AG04449 (cell line): ENCODE measurements at regions of chr17 and their contacts with region 1.

Region 1: DNA sequence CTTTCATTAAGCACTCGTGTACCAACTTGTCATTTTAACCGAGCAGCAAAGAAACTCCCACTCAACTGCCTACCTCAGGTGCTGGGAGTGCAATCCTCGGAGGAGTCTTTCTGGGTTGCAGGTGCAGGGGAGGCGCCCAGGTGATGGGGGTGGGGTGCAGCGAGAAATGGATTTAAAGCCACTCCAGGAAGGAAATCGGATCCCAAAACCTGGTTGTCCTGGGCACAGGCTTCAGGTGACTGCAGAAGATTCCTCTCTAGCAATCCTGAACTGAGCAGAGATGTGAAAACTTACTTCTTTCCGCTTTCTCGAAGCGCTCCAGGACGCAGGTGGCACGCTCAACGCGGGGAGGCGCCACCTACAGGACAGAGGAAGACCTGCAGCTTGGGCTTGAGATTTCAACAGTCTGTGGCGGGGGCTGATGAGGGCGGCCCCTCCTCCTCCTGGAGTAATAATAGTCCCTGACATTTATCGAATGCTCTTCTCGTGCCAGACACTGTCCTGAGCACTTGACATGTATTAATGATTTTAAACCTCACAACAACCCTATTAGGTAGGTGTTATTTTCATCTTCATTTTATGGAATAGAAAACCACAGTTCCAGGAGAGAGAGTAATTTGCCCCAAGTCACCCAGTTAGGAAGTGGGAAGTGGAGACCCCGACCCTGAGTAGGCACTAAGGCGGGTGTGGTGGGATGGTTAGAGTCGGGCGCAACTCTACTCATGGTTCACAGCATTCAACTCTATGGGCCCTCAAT is 27.2 kb upstream of the SKAP1 start:
- DNase-seq: no peak
- H3K4me3 ChIP-seq: no peak overlapping the region
- CTCF ChIP-seq: peak; percentile 97

Region 2: GRCh38 chr17:48307814-48308411 is 149.3 kb before region 1 on chr17:
- CTCF ChIA-PET with region 1: no interaction called
- POLR2A ChIA-PET with region 1: no interaction called
- DNase-seq: peak; percentile 17
- H3K4me3 ChIP-seq: no peak overlapping the region
- CTCF ChIP-seq: peak; percentile 85

Region 3: GRCh38 chr17:48441231-48441711 is 16.0 kb before region 1 on chr17:
- CTCF ChIA-PET with region 1: interaction called, 17 read pairs
- POLR2A ChIA-PET with region 1: no interaction called
- DNase-seq: no peak
- H3K4me3 ChIP-seq: no peak overlapping the region
- CTCF ChIP-seq: no peak

Region 4: GRCh38 chr17:48472411-48473281 is 15.4 kb after region 1 on chr17:
- CTCF ChIA-PET with region 1: interaction called, 24 read pairs
- POLR2A ChIA-PET with region 1: no interaction called
- DNase-seq: no peak
- H3K4me3 ChIP-seq: no peak overlapping the region
- CTCF ChIP-seq: no peak